Activated naive CD4-positive, alpha-beta T cell treated with anti-CD3 and anti-CD28 coated beads for 36 hours (primary cell): ENCODE measurements at regions of chr10 and their contacts with region 1.

Region 1: DNA sequence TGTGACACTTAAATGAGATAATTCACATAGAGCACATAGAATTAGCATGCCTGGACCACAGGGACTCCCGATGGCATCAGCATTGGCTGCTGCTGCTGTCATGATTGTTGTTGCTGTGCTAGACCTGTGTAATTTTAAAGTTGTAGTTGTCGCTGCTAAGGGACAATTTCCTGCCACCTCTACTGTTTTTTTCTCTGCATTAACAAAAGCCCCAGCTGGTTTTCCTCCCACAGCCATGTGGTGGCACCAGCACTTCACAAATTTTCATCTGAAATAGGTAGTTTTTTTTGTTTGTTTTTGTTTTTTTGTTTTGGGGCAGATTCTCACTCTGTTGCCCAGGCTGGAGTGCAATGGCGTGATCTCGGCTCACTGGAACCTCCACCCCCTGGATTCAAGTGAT is 25.4 kb upstream of the PRXL2A start:
- DNase-seq: peak; percentile 73
- H3K4me3 Mint-ChIP-seq: no peak overlapping the region
- H3K27ac Mint-ChIP-seq: no peak overlapping the region
- H3K4me1 Mint-ChIP-seq: peaks cover 16% of the 10 kb centered on the region
- H3K27me3 Mint-ChIP-seq: no peaks in the 10 kb centered on the region

Region 2: GRCh38 chr10:78437998-78438906 is 1944.7 kb before region 1 on chr10:
- CTCF ChIA-PET with region 1: no interaction called
- intact Hi-C with region 1: no loop called
- DNase-seq: peak; percentile 35
- H3K4me3 Mint-ChIP-seq: no peak overlapping the region
- H3K27ac Mint-ChIP-seq: no peak overlapping the region
- H3K4me1 Mint-ChIP-seq: no peaks in the 10 kb centered on the region
- H3K27me3 Mint-ChIP-seq: no peaks in the 10 kb centered on the region

Region 3: DNA sequence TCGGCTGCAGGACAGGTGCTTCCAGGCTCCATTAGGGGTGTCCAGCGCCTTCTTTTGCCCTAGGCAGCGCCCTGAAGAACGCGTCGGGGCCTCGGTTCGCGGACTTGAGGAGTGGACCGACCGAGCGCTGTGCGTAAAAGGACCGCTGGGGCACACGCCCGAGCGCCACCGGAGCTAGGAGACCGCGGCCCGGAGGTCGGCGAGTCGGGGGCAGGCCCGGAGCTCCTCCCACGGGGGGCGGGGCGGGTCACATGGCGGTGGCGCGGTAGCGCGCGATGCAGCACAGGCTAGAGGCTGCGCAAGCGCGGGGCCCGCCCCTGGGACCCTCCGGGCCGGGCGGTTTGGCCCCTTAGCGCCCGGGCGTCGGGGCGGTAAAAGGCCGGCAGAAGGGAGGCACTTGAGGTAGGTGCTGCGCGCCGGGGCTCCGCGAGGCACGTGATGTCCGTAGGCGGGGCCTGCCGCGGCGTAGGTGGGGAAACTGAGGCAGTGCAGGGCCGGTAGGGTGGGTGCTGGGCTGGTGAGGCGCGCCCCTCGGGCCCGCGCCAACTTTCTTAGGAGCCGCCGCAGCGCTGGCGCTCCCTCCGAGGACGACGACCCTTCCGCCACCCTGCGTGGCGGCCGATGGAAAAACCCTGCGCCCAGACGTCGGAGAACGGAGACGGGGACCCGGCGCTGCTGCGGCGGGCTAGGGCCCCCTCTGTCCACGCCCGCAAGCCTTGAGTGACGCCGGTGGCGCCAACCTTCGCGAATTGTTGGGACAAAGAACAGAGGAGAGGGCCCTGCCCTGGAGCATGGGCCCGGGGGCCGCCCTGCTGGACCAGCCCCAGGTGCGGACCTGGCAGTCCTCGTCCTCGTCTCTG is 25.5 kb after region 1 on chr10 and contains the start of gene PRXL2A:
- CTCF ChIA-PET with region 1: interaction called, 12 read pairs
- intact Hi-C with region 1: loop called (anchors 1 kb)
- DNase-seq: peak; percentile 85
- H3K4me3 Mint-ChIP-seq: peak within 1 kb of the TSS; percentile 89
- H3K27ac Mint-ChIP-seq: peak within 1 kb of the TSS; percentile 60
- H3K4me1 Mint-ChIP-seq: peaks cover 30% of the 10 kb centered on the region
- H3K27me3 Mint-ChIP-seq: no peaks in the 10 kb centered on the region
- total RNA-seq, gene PRXL2A: 17.6 to 17.7 TPM

Region 4: DNA sequence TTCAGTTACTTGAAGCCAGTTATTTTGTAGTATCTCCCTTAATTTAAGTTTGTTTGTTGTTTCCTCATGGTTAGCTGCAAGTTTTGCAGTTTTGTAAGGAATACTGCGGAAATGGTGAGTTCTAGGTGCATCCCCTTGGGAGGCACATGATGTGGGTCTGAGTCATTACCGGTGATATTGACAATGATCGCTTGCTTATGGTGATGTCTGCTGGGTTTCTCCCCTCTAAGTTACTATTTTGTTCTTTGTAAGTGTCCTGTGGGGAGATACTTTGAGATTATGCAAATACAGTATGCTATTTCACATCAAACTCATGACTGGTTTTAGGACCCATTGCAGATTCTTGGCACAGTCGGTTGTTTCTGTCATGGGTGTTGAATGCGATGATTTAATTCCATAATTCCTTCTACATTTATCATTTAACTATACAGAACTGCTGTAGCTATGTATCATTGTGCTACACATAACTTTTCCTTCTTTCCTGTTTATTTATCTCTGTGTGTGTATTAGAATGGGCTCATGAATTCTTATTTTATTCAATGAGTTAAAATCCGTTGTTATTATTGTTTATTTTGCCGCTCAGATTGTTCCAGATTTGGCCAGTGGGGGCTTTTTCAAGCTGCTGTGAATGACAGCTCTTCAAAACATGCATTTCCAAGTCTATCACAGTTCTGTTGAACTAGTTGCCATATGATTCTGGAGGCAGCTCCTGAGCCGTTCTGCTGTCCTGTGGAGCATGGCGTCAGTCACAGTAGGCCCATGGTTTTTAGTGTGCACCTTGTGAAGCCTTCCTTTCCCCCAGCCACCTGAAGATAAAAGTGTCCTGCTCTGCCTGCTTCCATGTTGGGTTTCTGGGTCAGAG is 89.5 kb after region 1 on chr10:
- CTCF ChIA-PET with region 1: no interaction called
- intact Hi-C with region 1: no loop called
- DNase-seq: peak; percentile 75
- H3K4me3 Mint-ChIP-seq: peak overlapping the region; percentile 36
- H3K27ac Mint-ChIP-seq: peak overlapping the region; percentile 98
- H3K4me1 Mint-ChIP-seq: peaks cover 87% of the 10 kb centered on the region
- H3K27me3 Mint-ChIP-seq: no peaks in the 10 kb centered on the region

Region 5: DNA sequence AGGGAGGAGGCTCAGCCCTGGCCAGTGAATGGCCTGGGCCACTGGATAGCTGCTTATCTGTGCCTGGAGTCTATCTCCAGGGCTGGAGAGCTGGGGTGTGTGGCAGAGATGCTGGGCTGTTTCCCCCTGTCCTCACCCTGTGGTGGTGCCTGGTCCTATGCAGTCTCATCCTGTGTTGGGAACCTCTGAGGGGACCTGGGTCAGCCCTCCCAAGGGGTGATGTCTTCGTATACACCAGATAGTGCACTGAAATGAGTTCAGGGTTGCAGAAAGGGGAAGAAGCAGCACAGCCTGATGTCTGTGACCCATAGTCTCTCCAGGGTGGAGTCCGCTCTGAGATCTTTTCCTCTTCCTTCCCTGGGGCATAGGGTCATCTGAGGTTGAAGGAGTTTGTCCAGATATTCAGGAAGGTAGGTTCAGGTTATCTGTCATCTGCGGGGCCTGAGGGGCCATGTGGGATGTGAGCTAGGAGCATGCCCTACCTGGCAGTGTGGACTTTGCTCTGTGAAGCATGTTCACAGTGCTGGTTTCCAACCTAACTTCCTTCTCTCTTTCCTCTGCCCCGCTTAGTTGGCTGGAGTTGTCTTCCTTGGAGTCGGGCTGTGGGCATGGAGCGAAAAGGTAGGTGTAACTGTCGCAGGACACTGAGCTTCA is 121.3 kb after region 1 on chr10:
- CTCF ChIA-PET with region 1: interaction called, 24 read pairs
- intact Hi-C with region 1: loop called (anchors 1 kb)
- DNase-seq: no peak
- H3K4me3 Mint-ChIP-seq: no peak overlapping the region
- H3K27ac Mint-ChIP-seq: peak overlapping the region; percentile 54
- H3K4me1 Mint-ChIP-seq: peaks cover 64% of the 10 kb centered on the region
- H3K27me3 Mint-ChIP-seq: no peaks in the 10 kb centered on the region

Region 6: DNA sequence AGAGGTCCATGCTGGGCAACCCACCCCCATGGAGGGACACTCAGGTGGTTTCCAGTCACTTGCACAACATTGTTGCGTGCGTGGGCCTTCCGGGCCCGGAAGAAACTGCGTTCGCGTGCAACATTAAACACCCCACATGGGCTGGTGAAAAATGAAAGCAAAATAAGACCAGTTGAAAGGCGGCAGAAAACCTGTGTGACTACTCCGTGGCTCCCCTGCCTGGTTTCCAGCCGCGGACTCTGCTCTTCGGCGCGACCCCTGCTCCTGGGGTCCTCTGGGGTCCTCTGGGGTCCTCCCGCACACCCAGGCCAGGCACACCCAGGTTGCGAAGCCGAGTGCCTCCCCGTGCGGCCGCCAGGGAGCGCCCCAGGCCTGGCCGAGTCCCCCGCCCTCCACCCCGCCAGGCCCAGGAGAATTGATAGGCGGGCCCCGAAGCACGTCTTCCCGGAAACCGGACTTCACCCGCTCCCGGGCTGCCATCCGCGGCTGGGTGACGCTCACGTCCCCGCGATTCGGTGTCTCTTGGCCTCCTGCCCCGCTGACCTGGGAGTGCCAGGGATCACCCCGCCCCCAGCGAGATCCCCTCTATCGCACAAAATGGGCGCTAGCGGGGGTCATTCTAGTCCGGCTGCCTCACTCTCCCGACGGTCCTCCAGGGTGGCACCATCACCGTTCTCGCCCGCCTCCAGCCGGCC is 152.8 kb after region 1 on chr10:
- CTCF ChIA-PET with region 1: interaction called, 11 read pairs
- intact Hi-C with region 1: no loop called
- DNase-seq: peak; percentile 83
- H3K4me3 Mint-ChIP-seq: peak overlapping the region; percentile 89
- H3K27ac Mint-ChIP-seq: peak overlapping the region; percentile 98
- H3K4me1 Mint-ChIP-seq: peaks cover 28% of the 10 kb centered on the region
- H3K27me3 Mint-ChIP-seq: no peaks in the 10 kb centered on the region

Region 7: GRCh38 chr10:80599424-80599847 is 216.4 kb after region 1 on chr10:
- CTCF ChIA-PET with region 1: interaction called, 8 read pairs
- intact Hi-C with region 1: loop called (anchors 2 kb)
- DNase-seq: peak; percentile 58
- H3K4me3 Mint-ChIP-seq: no peak overlapping the region
- H3K27ac Mint-ChIP-seq: no peak overlapping the region
- H3K4me1 Mint-ChIP-seq: no peaks in the 10 kb centered on the region
- H3K27me3 Mint-ChIP-seq: no peaks in the 10 kb centered on the region

Region 8: GRCh38 chr10:80699602-80700039 is 316.6 kb after region 1 on chr10:
- CTCF ChIA-PET with region 1: interaction called, 4 read pairs
- intact Hi-C with region 1: loop called (anchors 2 kb)
- DNase-seq: peak; percentile 87
- H3K4me3 Mint-ChIP-seq: no peak overlapping the region
- H3K27ac Mint-ChIP-seq: no peak overlapping the region
- H3K4me1 Mint-ChIP-seq: no peaks in the 10 kb centered on the region
- H3K27me3 Mint-ChIP-seq: no peaks in the 10 kb centered on the region